Calu3 (cell line): ENCODE measurements at regions of chr1 and their contacts with region 1.

Region 1: GRCh38 chr1:233790662-233791375 is 113.7 kb upstream of the SLC35F3 start:
- DNase-seq: peak; percentile 50
- H3K4me3 Mint-ChIP-seq: no peak overlapping the region
- H3K27ac Mint-ChIP-seq: no peak overlapping the region
- H3K4me1 Mint-ChIP-seq: no peaks in the 10 kb centered on the region
- H3K27me3 Mint-ChIP-seq: no peaks in the 10 kb centered on the region
- CTCF ChIP-seq: peak; percentile 82

Region 2: GRCh38 chr1:233394860-233395717 is 395.7 kb before region 1 on chr1:
- CTCF ChIA-PET with region 1: no interaction called
- intact Hi-C with region 1: loop called (anchors 1 kb)
- DNase-seq: peak; percentile 59
- H3K4me3 Mint-ChIP-seq: no peak overlapping the region
- H3K27ac Mint-ChIP-seq: no peak overlapping the region
- H3K4me1 Mint-ChIP-seq: peaks cover 9% of the 10 kb centered on the region
- H3K27me3 Mint-ChIP-seq: no peaks in the 10 kb centered on the region
- CTCF ChIP-seq: peak; percentile 75

Region 3: GRCh38 chr1:233520261-233521191 is 270.3 kb before region 1 on chr1:
- CTCF ChIA-PET with region 1: interaction called, 8 read pairs
- intact Hi-C with region 1: loop called (anchors 2 kb)
- DNase-seq: peak; percentile 80
- H3K4me3 Mint-ChIP-seq: no peak overlapping the region
- H3K27ac Mint-ChIP-seq: peak overlapping the region; percentile 40
- H3K4me1 Mint-ChIP-seq: peaks cover 21% of the 10 kb centered on the region
- H3K27me3 Mint-ChIP-seq: no peaks in the 10 kb centered on the region
- CTCF ChIP-seq: no peak

Region 4: DNA sequence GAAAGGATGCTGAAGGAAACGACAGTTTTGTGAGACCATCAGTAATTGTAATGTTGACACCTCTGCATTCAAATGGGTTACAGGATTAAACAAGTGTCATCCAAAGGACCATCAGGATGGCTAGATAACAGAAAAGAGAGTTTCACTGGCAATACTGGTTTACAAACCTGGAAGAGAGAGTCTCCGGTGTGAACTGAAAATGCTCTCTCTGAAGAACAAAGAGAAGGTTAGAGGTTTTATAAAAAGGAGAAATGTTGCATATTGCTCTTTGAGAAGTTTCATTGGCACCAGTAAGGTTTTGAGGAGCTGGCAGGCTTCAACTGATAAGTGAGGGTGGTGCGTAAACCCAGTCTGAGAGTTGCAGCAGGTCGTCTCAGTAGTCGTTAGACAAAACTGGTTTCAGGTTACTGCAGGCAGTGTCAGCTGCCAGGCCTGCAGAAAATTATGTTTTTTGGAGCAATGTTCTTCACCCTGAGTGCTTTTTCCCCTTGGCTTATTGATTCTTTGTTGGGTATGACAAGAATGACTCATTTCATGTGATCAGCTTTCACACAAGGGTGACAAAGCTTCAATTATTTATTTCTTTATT is 134.7 kb before region 1 on chr1:
- CTCF ChIA-PET with region 1: no interaction called
- intact Hi-C with region 1: loop called (anchors 5 kb)
- DNase-seq: peak; percentile 39
- H3K4me3 Mint-ChIP-seq: peak overlapping the region; percentile 70
- H3K27ac Mint-ChIP-seq: peak overlapping the region; percentile 99
- H3K4me1 Mint-ChIP-seq: peaks cover 73% of the 10 kb centered on the region
- H3K27me3 Mint-ChIP-seq: no peaks in the 10 kb centered on the region
- CTCF ChIP-seq: no peak

Region 5: DNA sequence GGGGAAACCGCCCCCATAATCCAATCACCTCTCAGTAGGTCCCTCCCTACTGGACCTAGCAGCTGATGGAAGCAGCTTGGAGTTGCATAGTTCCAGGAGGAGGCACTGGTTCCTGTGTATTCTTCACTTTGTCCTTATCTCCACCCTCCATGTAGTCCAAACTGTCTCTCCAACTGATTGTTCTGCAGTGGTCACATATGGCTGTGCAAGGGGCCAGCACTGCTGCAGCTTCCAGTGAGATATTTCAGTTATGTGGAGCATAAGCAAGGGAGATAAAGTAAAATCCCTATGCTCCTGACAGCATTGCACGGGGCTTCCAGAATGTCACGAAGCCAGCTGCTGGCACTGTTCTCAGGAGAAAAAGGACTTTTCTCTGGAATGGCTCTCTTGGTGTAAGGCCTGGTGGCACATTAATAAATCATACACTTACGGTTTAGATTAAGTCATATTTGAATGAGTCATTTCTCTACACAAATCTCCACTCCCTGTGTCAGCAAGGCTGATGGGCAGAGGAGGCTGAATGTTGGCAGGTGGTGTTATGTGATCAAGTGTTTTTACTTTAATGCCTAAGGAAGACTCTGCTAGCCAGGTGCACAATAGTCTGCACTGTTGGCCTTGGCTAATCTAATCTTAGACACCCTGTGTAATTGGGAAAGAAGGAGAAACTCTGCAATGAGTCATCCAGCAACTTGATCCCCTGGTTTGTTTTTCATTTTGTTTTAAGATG is 83.5 kb before region 1 on chr1:
- CTCF ChIA-PET with region 1: no interaction called
- intact Hi-C with region 1: no loop called
- DNase-seq: peak; percentile 80
- H3K4me3 Mint-ChIP-seq: peak overlapping the region; percentile 65
- H3K27ac Mint-ChIP-seq: peak overlapping the region; percentile 95
- H3K4me1 Mint-ChIP-seq: peaks cover 61% of the 10 kb centered on the region
- H3K27me3 Mint-ChIP-seq: no peaks in the 10 kb centered on the region
- CTCF ChIP-seq: no peak

Region 6: DNA sequence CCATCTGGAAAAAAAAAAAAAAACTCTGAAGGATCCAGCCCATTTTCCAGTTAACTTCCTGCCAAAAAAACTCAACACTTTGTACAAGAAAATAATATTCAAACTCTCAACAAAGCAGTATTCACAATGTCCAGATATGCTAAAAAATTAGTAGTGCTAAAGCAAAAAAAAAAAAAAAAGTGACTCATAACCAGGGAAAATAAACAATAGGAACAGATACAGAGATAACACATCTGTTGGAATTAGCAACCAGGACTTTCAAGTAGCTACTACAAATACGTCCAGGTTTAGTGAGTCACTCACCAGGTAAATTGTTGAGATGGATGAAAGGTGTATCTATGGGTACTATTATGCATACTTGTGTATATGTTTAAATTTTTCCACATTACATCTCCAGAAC is 31.2 kb before region 1 on chr1:
- CTCF ChIA-PET with region 1: no interaction called
- intact Hi-C with region 1: no loop called
- DNase-seq: no peak
- H3K4me3 Mint-ChIP-seq: no peak overlapping the region
- H3K27ac Mint-ChIP-seq: no peak overlapping the region
- H3K4me1 Mint-ChIP-seq: peaks cover 10% of the 10 kb centered on the region
- H3K27me3 Mint-ChIP-seq: no peaks in the 10 kb centered on the region
- CTCF ChIP-seq: no peak

Region 7: DNA sequence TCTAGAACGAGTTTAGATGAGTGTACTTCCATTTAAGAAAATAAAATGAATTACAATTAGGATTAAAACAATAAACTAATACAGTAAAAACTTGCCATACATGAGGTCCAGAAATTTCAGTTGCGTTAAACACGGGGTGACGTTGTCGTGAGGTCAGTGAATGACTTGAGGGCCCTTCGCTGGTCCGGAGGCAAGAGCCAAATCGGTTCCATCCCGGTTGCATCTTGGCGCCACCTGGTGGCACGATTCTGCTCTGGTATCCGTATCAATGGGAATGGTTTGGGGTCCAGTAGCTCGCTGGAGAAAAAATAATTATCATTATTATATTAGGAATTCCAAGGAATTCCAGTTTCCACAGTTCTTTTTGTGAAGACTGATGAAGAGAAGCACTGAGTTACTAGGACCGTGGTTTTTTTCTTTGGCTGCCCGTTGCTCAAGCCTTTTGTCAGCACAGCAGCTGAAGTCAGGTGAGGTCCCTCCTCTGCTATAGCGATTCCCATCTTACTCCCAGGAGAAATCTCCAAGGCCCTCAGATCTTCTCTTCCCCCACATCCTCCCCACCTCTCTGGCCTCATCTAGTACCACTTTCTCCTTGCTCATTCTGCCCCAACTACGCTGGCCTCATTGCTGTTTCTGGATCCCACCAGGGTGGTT is 275.1 kb after region 1 on chr1:
- CTCF ChIA-PET with region 1: no interaction called
- intact Hi-C with region 1: loop called (anchors 5 kb)
- DNase-seq: peak; percentile 88
- H3K4me3 Mint-ChIP-seq: no peak overlapping the region
- H3K27ac Mint-ChIP-seq: no peak overlapping the region
- H3K4me1 Mint-ChIP-seq: no peaks in the 10 kb centered on the region
- H3K27me3 Mint-ChIP-seq: no peaks in the 10 kb centered on the region
- CTCF ChIP-seq: peak; percentile 91